Left cardiac atrium (tissue), 4 donors: ENCODE measurements at regions of chr20 and their contacts with region 1.

Region 1: GRCh38 chr20:43749734-43750294 is 23.0 kb upstream of the GTSF1L start:
- DNase-seq: peak; percentile 79
- ATAC-seq: peak; percentile 75 to 84

Region 2: DNA sequence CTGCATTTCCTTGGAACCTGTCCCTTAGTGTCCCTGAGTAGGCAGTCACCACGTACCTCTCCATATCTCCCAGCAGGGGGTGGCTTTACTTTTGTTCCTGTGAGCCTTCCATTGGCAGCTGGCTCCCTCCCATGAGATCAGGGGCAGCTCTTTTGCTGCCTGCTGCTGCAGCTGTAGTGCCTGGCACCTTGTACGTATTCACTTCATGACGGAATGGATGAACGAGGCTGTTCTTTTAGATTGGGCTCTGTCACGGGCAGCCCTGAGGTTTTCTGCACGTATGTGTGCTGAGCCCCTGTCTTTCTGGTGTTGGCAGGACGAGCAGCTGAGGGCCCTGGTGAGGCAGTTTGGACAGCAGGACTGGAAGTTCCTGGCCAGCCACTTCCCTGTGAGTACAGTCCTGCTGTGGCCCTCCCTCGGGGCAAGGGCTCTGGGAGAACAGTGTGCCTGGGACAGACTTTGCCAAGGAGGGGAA is 68.3 kb before region 1 on chr20:
- intact Hi-C with region 1: loop called in 1 of 2 experiments (anchors 10 kb)
- DNase-seq: no peak
- ATAC-seq: peak in 1 of 2 donors; percentile 82

Region 3: GRCh38 chr20:44080646-44081267 is 330.9 kb after region 1 on chr20:
- intact Hi-C with region 1: loop called (anchors 1 to 5 kb)
- DNase-seq: peak; percentile 64
- ATAC-seq: peak; percentile 82 to 88